T-cell (primary cell): ENCODE measurements at regions of chr18 and their contacts with region 1.

Region 1: GRCh38 chr18:46281185-46282176 is 177.3 kb downstream of the HAUS1 start:
- DNase-seq: peak in 34 of 35 experiments; percentile 8 to 65 (median 40)
- ATAC-seq: peak; percentile 66 to 80 (median 75)
- H3K4me3 ChIP-seq: no peak overlapping the region
- H3K4me3 Mint-ChIP-seq: no peak overlapping the region
- H3K27ac ChIP-seq: no peak overlapping the region
- H3K27ac Mint-ChIP-seq: no peak overlapping the region
- H3K4me1 ChIP-seq: no peaks in the 10 kb centered on the region
- H3K4me1 Mint-ChIP-seq: peaks cover 15 to 25% (median 18%) of the 10 kb centered on the region in 3 donors
- H3K27me3 ChIP-seq: no peaks in the 10 kb centered on the region
- H3K27me3 Mint-ChIP-seq: no peaks in the 10 kb centered on the region

Region 2: DNA sequence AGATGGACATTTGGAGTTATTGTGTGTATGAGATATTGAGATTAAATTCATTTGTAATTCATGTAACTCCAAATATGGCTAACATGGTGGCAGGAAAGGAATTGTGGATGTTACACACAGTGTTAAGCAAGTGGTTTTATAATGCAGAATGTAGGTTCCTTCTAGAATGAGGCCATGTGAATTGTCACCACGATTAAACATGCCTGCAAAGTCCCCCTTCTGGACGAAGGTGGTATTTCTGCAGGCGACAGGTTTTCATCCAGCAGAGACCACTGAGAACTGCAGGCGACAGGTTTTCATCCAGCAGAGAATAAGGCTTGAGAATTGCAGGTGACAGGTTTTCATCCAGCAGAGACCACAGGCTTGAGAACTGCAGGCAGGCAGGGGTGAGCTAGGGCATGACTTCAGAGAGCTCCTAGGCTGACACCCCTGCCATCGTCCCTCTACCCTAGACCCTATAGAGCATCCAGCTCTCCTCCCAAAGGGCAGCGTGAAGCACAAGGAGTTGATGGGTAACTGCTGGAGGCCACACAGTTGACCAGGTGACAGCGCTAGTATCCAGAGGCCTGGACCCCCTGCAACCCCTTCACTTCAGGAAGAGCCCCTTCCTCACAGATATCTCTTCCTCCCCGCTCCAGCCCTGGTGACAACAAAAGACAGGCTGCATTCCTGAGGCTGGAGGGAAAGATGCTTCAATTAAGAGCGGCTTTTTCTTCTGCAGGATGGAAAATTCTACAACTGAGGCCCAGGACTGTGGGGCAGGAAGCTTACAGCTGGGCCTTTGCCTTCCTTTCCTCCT is 199.8 kb after region 1 on chr18:
- CTCF ChIA-PET with region 1: interaction called, 6 to 12 read pairs
- POLR2A ChIA-PET with region 1: no interaction called
- DNase-seq: peak in 30 of 35 experiments; percentile 11 to 70 (median 39)
- ATAC-seq: peak; percentile 48 to 65 (median 54)
- H3K4me3 ChIP-seq: no peak overlapping the region
- H3K4me3 Mint-ChIP-seq: no peak overlapping the region
- H3K27ac ChIP-seq: no peak overlapping the region
- H3K27ac Mint-ChIP-seq: no peak overlapping the region
- H3K4me1 ChIP-seq: no peaks in the 10 kb centered on the region
- H3K4me1 Mint-ChIP-seq: no peaks in the 10 kb centered on the region
- H3K27me3 ChIP-seq: peaks cover 0 to 26% of the 10 kb centered on the region in 2 experiments
- H3K27me3 Mint-ChIP-seq: peaks cover 11 to 21% of the 10 kb centered on the region in 2 donors